Left cardiac atrium (tissue), 4 donors: ENCODE measurements at regions of chr1 and their contacts with region 1.

Region 1: GRCh38 chr1:10494754-10495474 is 20.2 kb downstream of the PEX14 start:
- DNase-seq: peak; percentile 70
- ATAC-seq: peak; percentile 85 to 91

Region 2: GRCh38 chr1:10378081-10378841 is 116.7 kb before region 1 on chr1:
- intact Hi-C with region 1: loop called in 1 of 2 experiments (anchors 10 kb)
- DNase-seq: peak; percentile 48
- ATAC-seq: peak; percentile 55 to 60

Region 3: DNA sequence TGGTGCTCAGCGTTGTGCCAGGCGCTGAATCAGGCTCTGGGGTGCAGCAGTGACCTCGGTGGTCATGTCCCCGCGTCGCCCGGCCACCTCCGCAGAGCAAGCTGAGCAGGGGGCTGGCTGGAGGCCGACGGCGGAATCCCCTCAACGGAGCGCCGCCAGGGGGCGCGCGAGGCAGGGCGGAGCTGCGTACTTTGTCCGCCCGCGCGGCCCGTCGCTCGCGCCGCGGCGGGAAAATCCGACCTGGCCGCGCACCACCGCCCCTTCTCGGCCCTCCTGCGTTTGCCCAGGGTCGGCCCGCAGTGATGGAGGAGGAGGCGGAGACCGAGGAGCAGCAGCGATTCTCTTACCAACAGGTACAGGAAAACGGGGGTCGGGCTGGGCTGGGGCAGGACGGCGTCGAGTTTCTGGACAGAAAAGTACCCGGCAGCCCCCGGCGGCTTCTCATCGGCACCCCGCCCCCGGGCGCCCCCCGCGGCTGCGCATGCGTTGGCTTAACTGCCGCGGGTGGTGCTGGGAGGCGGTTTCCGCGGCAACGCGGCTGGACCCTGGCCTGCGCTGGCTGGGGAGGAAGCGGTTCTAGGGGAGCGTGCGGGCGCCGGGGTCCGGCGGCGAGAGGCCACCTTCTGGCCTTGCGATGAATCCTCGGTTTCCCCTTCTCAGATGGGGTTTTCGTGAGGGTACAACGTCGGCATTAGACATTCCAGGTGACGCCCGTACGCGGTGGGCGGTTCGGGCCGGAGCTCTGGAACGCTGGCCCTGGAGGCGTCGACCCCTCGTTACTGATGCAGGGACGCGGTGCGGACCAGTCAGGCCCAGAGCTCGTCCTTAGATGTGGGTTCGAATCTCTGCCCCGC is 64.5 kb before region 1 on chr1 and contains the start of gene CENPS:
- intact Hi-C with region 1: loop called in 1 of 2 experiments (anchors 2 kb)
- DNase-seq: peak; percentile 96
- ATAC-seq: peak; percentile 98
- total RNA-seq, gene CENPS: 4.1 to 5.0 TPM